HEK293 (cell line): ENCODE measurements at regions of chr12 and their contacts with region 1.

Region 1: GRCh38 chr12:53995378-53996239 is 4.4 kb upstream of the HOXC9 start:
- H3K4me3 ChIP-seq: peak overlapping the region; percentile 61
- H3K27ac ChIP-seq: peak overlapping the region; percentile 98
- H3K4me1 ChIP-seq: peaks cover 32% of the 10 kb centered on the region
- CTCF ChIP-seq: no peak

Region 2: GRCh38 chr12:53938326-53939140 is 57.1 kb before region 1 on chr12 and contains the start of gene HOXC13:
- CTCF ChIA-PET with region 1: no interaction called
- POLR2A ChIA-PET with region 1: interaction called, 13 read pairs
- H3K4me3 ChIP-seq: peak within 1 kb of the TSS; percentile 63
- H3K27ac ChIP-seq: peak within 1 kb of the TSS; percentile 94
- H3K4me1 ChIP-seq: peaks cover 6% of the 10 kb centered on the region; the same call in 1 of the 2 replicates
- CTCF ChIP-seq: no peak

Region 3: GRCh38 chr12:53984901-53985709 is 10.5 kb before region 1 on chr12 and contains the start of gene HOXC10:
- CTCF ChIA-PET with region 1: interaction called, 27 read pairs
- POLR2A ChIA-PET with region 1: interaction called, 16 read pairs
- H3K4me3 ChIP-seq: peak within 1 kb of the TSS; percentile 32
- H3K27ac ChIP-seq: peak within 1 kb of the TSS; percentile 90
- H3K4me1 ChIP-seq: peaks cover 25% of the 10 kb centered on the region
- CTCF ChIP-seq: peak; percentile 81

Region 4: GRCh38 chr12:54017878-54018467 is 22.4 kb after region 1 on chr12:
- CTCF ChIA-PET with region 1: no interaction called
- POLR2A ChIA-PET with region 1: interaction called, 34 read pairs
- H3K4me3 ChIP-seq: peak overlapping the region; percentile 81
- H3K27ac ChIP-seq: peak overlapping the region; percentile 100
- H3K4me1 ChIP-seq: peaks cover 49% of the 10 kb centered on the region
- CTCF ChIP-seq: no peak

Region 5: DNA sequence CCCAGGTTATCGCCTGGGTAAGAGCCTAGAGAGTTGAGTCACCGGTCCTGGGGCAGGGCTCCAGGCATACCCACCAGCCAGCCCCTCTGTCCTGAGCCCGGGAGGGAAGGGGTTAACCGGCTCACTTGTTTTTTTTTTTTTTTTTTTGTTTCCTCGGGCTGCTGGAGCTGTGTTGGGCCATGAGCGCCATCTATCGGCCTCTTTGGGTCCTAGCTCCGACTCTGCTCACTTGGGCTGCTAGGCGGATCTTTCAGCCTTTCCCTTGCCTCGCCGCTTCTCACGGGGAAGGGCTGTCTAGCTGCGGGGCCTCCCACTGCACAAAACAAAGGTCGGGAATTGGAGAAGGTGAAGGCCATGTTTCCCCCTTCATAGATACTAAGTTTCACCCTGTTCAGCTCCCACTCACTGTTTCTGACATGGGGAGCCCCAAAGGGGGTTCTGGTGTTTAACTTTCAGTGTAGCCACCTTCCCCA is 196.0 kb after region 1 on chr12:
- CTCF ChIA-PET with region 1: interaction called, 12 read pairs
- POLR2A ChIA-PET with region 1: interaction called, 5 read pairs
- H3K4me3 ChIP-seq: no peak overlapping the region
- H3K27ac ChIP-seq: peak overlapping the region; percentile 43; the same call in 1 of the 2 replicates
- H3K4me1 ChIP-seq: peaks cover 14% of the 10 kb centered on the region
- CTCF ChIP-seq: peak; percentile 97

Region 6: GRCh38 chr12:54201001-54201794 is 205.6 kb after region 1 on chr12:
- CTCF ChIA-PET with region 1: interaction called, 25 read pairs
- POLR2A ChIA-PET with region 1: interaction called, 8 read pairs
- H3K4me3 ChIP-seq: no peak overlapping the region
- H3K27ac ChIP-seq: no peak overlapping the region
- H3K4me1 ChIP-seq: peaks cover 10% of the 10 kb centered on the region
- CTCF ChIP-seq: peak; percentile 94

Region 7: DNA sequence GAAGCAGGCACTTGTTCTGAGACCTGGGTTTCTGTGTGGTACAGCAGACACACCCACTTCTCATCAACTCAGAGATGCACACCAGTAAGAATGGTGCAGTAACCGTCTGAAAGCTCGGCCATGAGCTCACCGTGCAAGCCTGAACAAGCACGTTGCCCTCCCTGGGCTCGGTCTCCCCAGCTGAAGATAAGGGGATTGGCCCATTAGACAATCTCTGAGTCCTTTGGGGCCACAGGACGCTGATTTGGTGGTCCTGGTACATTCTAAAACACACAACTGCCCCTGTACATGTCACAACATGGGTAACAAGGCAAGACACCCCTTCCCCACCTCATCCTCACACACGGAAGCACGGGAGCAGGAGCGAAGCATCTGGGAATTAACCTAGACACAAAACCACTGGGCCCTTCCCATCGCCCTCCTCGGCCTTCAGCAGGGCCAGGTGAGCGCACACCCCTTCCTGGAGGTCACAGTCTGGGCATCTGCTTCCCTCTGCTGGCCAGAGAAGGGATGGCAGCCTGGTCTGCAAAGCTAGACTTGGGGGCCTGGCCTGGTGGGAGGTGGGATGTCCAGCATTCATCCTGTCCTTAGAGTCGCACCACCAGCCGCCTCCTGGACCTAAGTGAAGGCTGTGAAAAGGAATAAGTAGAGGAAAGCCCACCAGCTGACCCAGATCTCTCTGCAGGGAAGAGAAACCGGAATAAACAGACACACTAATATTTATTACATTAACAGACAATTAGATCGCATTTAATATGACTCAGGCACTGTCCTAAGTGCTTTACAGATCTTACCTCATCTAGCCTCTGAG is 212.1 kb after region 1 on chr12:
- CTCF ChIA-PET with region 1: interaction called, 49 read pairs
- POLR2A ChIA-PET with region 1: interaction called, 8 read pairs
- H3K4me3 ChIP-seq: no peak overlapping the region
- H3K27ac ChIP-seq: 0 out of 2 replicates have a peak overlapping the region, but pooled peaks have one; percentile 13
- H3K4me1 ChIP-seq: no peaks in the 10 kb centered on the region
- CTCF ChIP-seq: peak; percentile 89